Activated CD4-positive, alpha-beta memory T cell treated with anti-CD3 and anti-CD28 coated beads for 36 hours (primary cell): ENCODE measurements at regions of chr13 and their contacts with region 1.

Region 1: GRCh38 chr13:113904411-113904810 is 40.5 kb upstream of the GAS6 start:
- DNase-seq: peak; percentile 55
- H3K4me3 Mint-ChIP-seq: no peak overlapping the region
- H3K27ac Mint-ChIP-seq: no peak overlapping the region
- H3K4me1 Mint-ChIP-seq: peaks cover 7% of the 10 kb centered on the region
- H3K27me3 Mint-ChIP-seq: peaks cover 11% of the 10 kb centered on the region

Region 2: GRCh38 chr13:113350065-113350937 is 554.1 kb before region 1 on chr13:
- CTCF ChIA-PET with region 1: no interaction called
- POLR2A ChIA-PET with region 1: no interaction called
- intact Hi-C with region 1: no loop called
- DNase-seq: no peak
- H3K4me3 Mint-ChIP-seq: no peak overlapping the region
- H3K27ac Mint-ChIP-seq: no peak overlapping the region
- H3K4me1 Mint-ChIP-seq: no peaks in the 10 kb centered on the region
- H3K27me3 Mint-ChIP-seq: no peaks in the 10 kb centered on the region

Region 3: GRCh38 chr13:113742000-113742441 is 162.4 kb before region 1 on chr13:
- CTCF ChIA-PET with region 1: no interaction called
- POLR2A ChIA-PET with region 1: no interaction called
- intact Hi-C with region 1: no loop called
- DNase-seq: peak; percentile 42
- H3K4me3 Mint-ChIP-seq: no peak overlapping the region
- H3K27ac Mint-ChIP-seq: no peak overlapping the region
- H3K4me1 Mint-ChIP-seq: peaks cover 24% of the 10 kb centered on the region
- H3K27me3 Mint-ChIP-seq: peaks cover 17% of the 10 kb centered on the region

Region 4: DNA sequence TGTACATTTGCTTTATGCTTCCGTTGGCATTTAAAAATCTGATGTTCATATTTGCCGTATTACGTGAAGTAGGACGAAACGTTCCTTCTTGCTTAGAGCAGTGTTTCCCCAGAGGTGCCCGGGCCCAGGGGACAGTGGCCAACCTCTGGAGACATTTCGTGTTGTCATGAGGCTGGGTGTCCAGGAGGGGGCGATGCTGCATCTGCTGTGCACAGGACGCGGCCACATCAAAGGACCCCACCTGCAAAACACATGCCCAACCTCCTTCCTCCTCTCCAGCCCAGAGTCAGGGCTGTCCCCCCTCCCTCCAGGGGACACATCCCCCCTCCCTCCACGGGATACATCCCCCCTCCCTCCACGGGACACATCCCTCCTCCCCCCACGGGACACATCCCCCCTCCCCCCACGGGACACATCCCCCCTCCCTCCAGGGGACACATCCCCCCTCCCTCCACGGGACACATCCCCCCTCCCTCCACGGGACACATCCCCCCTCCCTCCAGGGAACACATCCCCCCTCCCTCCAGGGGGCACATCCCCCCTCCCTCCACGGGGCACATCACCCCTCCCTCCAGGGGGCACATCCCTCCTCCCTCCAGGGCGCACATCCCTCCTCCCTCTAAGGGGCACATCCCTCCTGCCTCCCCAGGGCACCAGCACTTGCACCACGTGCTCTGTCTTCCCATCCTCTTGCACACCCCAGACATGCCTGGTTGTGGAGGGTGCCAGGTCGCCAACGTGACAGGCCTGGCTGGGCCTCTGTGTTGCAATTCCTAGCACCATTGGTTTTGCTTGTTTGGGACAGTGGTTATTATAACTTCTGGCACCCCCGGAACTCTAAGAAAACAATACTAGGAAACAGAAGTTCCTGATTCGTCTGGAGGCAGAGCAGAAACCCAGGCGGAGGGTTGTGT is 87.2 kb before region 1 on chr13:
- CTCF ChIA-PET with region 1: interaction called, 4 read pairs
- POLR2A ChIA-PET with region 1: no interaction called
- intact Hi-C with region 1: loop called (anchors 2 kb)
- DNase-seq: peak; percentile 91
- H3K4me3 Mint-ChIP-seq: peak overlapping the region; percentile 92
- H3K27ac Mint-ChIP-seq: peak overlapping the region; percentile 51
- H3K4me1 Mint-ChIP-seq: peaks cover 19% of the 10 kb centered on the region
- H3K27me3 Mint-ChIP-seq: peaks cover 2% of the 10 kb centered on the region